ENCODE measurements at regions of chr5 and their contacts with region 1.

Region 1: DNA sequence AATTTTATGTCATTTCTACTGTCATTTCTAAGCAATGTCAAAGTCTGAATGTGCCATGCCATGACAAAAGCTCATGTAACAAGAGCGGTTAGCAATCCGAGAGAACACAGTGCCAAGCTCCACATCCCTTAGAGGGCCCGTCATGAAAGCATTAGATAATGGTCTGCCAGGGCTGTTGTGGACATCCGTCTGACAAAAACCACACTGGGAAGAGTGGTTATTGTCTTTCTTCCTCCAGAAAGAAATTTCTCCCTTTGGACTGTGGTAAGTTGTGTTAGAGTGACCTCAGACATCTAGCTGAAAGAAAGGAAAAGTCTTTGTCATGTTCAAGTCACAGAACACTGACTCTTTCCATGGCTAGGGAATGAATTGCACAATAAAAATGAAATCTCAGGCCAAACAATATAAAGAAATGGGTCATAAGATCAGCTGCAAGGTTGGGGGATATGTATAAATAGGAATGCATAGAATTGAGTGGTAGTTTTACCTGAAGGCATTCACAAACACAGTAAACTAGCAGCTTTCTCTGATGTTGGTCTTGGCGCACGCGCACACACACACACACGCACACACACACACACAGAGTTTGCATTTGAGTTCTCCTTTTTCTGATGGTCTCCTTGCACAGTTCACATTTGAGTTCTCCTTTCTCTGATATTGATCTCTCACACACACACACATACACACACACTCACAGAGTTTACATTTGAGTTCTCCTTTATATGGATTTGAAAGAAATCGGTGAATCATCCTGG is 5.3 kb downstream of the SLC1A3 start:
- DNase-seq: no peak

Region 2: GRCh38 chr5:36651761-36652685 is 40.3 kb after region 1 on chr5:
- intact Hi-C with region 1: loop called (anchors 5 kb)
- DNase-seq: no peak

Measured in cardiac septum (tissue), 1 donor.